IMR-90 (cell line): ENCODE measurements at regions of chr5 and their contacts with region 1.

Region 1: DNA sequence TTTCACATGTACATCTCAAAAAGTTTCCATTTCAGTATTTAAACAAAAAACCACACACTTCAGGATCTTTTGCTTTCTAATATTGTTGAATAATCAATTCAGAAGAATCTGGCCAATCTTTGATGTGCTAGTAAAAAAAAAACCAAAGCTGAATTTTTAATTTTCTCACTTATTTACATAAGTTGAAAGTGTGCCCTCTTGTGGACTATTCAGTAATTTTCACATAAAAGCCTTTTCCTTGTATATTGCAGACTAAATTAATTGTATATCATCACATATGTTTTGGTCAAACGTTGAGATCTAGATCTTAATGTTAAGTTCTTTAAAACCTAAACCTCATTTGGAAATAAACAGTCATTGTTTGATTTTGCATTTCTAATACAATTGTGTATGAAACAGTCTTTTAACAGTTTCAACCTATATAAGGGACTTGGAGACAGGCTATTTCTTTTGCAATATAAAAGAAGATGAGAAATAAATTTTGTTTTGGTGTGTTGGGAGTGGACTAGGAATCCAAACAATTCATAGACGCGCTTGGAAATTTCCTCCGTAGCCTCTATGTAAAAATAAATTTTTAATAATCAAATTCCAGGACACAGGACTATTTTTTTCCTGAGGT is 68.1 kb downstream of the NIPBL start:
- DNase-seq: peak; percentile 76
- ATAC-seq: no peak
- H3K4me3 ChIP-seq: no peak overlapping the region
- H3K27ac ChIP-seq: no peak overlapping the region
- H3K4me1 ChIP-seq: no peaks in the 10 kb centered on the region
- H3K27me3 ChIP-seq: no peaks in the 10 kb centered on the region
- CTCF ChIP-seq: peak; percentile 57
- POLR2A ChIP-seq: no peak
- RAD21 ChIP-seq: peak; percentile 35; the same call in 1 of the 2 replicates

Region 2: GRCh38 chr5:36739751-36740221 is 204.9 kb before region 1 on chr5:
- CTCF ChIA-PET with region 1: no interaction called
- POLR2A ChIA-PET with region 1: no interaction called
- dilution Hi-C with region 1: no loop called
- in situ Hi-C with region 1: no loop called
- intact Hi-C with region 1: loop called (anchors 2 kb)
- DNase-seq: peak; percentile 69
- ATAC-seq: peak; percentile 61
- H3K4me3 ChIP-seq: no peak overlapping the region; the same call in 1 of the 2 replicates
- H3K27ac ChIP-seq: no peak overlapping the region
- H3K4me1 ChIP-seq: peaks cover 4% of the 10 kb centered on the region
- H3K27me3 ChIP-seq: peaks cover 18% of the 10 kb centered on the region
- CTCF ChIP-seq: peak; percentile 72
- POLR2A ChIP-seq: no peak
- RAD21 ChIP-seq: peak; percentile 59

Region 3: GRCh38 chr5:36836831-36837230 is 107.9 kb before region 1 on chr5:
- CTCF ChIA-PET with region 1: no interaction called
- POLR2A ChIA-PET with region 1: no interaction called
- dilution Hi-C with region 1: no loop called
- in situ Hi-C with region 1: no loop called
- intact Hi-C with region 1: no loop called
- DNase-seq: no peak
- ATAC-seq: no peak
- H3K4me3 ChIP-seq: no peak overlapping the region
- H3K27ac ChIP-seq: no peak overlapping the region
- H3K4me1 ChIP-seq: no peaks in the 10 kb centered on the region
- H3K27me3 ChIP-seq: peaks cover 9% of the 10 kb centered on the region
- CTCF ChIP-seq: no peak
- POLR2A ChIP-seq: no peak
- RAD21 ChIP-seq: no peak

Region 4: DNA sequence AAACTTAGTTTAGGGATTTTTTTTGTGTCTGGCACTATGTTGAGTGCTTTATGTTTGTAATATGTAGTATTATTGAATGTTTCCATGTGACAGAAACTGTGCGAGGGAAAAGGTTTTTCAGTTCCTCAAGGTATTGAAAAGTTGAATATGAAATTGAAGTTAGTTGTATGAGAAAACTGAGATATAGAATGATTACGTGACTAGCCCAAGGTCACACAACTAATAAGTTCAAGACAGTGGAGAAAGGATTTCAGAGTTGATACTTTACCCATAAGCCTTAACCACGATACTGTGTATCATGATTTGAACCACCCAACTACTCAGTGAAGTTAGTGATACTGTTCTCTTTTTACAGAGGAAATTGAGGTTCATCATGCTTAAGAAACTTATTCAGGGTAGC is 62.5 kb before region 1 on chr5:
- CTCF ChIA-PET with region 1: no interaction called
- POLR2A ChIA-PET with region 1: no interaction called
- dilution Hi-C with region 1: no loop called
- in situ Hi-C with region 1: loop called (anchors 5 kb)
- intact Hi-C with region 1: no loop called
- DNase-seq: no peak
- ATAC-seq: no peak
- H3K4me3 ChIP-seq: no peak overlapping the region
- H3K27ac ChIP-seq: no peak overlapping the region
- H3K4me1 ChIP-seq: no peaks in the 10 kb centered on the region
- H3K27me3 ChIP-seq: no peaks in the 10 kb centered on the region
- CTCF ChIP-seq: no peak
- POLR2A ChIP-seq: no peak
- RAD21 ChIP-seq: no peak